Activated CD4-positive, alpha-beta T cell treated with anti-CD3 and anti-CD28 coated beads for 36 hours (primary cell): ENCODE measurements at regions of chr1 and their contacts with region 1.

Region 1: GRCh38 chr1:16607433-16607851 is 5.9 kb downstream of the NBPF1 start:
- DNase-seq: no peak
- ATAC-seq: no peak
- H3K4me3 Mint-ChIP-seq: no peak overlapping the region
- H3K27ac Mint-ChIP-seq: no peak overlapping the region
- H3K4me1 Mint-ChIP-seq: no peaks in the 10 kb centered on the region
- H3K27me3 Mint-ChIP-seq: no peaks in the 10 kb centered on the region

Region 2: GRCh38 chr1:16618719-16619118 is 11.3 kb after region 1 on chr1:
- CTCF ChIA-PET with region 1: interaction called, 31 read pairs
- POLR2A ChIA-PET with region 1: interaction called, 6 read pairs
- intact Hi-C with region 1: loop called in 1 of 2 experiments (anchors 1 kb)
- DNase-seq: peak; percentile 9
- ATAC-seq: no peak
- H3K4me3 Mint-ChIP-seq: no peak overlapping the region
- H3K27ac Mint-ChIP-seq: no peak overlapping the region
- H3K4me1 Mint-ChIP-seq: no peaks in the 10 kb centered on the region
- H3K27me3 Mint-ChIP-seq: no peaks in the 10 kb centered on the region

Region 3: DNA sequence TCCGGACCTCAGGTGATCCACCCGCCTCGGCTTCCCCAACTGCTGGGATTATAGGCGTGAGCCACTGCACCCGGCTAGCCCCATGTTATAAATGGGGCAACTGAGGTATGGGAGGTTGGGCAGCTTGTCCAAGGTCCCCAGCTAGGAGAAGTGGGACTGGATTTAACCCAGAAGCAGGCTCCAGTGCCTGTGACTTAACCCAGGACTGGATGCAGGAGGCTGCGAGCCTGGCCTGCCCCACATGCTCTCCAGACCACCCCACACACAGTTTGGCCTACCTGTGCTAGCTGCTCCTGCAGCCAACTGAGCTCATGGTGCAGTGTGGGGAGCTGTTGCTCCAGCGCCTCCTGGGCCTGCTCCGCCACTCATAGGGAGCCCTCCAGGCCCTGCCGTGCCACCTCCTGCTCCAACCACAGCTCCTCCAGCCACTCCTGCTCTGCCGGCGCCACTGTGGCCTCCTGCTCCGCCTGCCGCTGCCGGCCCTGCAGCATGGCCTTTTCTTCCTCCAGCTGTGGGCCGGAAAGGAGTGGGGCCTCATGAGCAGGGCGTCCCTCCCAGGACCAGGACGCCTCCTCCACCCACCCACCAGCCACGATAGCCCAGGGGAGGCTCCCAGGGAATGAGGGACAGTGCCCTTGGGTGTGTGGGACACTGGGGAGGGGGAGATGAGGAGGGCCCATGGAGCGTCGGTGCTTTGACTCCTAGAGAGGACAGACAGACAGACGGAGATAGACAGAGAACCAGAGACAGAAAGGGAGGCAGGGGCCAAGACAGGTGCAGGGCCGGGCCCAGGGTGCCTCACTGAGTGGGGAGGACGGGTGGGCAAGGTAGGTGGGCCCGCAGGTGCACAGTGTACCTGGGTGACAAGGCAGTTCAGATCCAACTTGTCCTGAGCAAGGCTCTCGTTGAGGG is 18.3 kb after region 1 on chr1:
- CTCF ChIA-PET with region 1: interaction called, 31 read pairs
- POLR2A ChIA-PET with region 1: interaction called, 6 read pairs
- intact Hi-C with region 1: loop called in 1 of 2 experiments (anchors 1 kb)
- DNase-seq: no peak
- ATAC-seq: no peak
- H3K4me3 Mint-ChIP-seq: no peak overlapping the region
- H3K27ac Mint-ChIP-seq: no peak overlapping the region
- H3K4me1 Mint-ChIP-seq: no peaks in the 10 kb centered on the region
- H3K27me3 Mint-ChIP-seq: no peaks in the 10 kb centered on the region

Region 4: GRCh38 chr1:16644193-16644481 is 36.7 kb after region 1 on chr1:
- CTCF ChIA-PET with region 1: interaction called, 3 read pairs
- POLR2A ChIA-PET with region 1: no interaction called
- intact Hi-C with region 1: loop called in 1 of 2 experiments (anchors 1 kb)
- DNase-seq: no peak
- ATAC-seq: peak; percentile 47
- H3K4me3 Mint-ChIP-seq: no peak overlapping the region
- H3K27ac Mint-ChIP-seq: no peak overlapping the region
- H3K4me1 Mint-ChIP-seq: peaks cover 3% of the 10 kb centered on the region
- H3K27me3 Mint-ChIP-seq: no peaks in the 10 kb centered on the region